ENCODE measurements at regions of chr11 and their contacts with region 1.

Region 1: GRCh38 chr11:63906585-63906984 is 10.4 kb downstream of the RCOR2 start:
- DNase-seq: peak in 1 of 2 experiments; percentile 69
- H3K4me3 ChIP-seq: no peak overlapping the region
- H3K27ac ChIP-seq: no peak overlapping the region
- H3K4me1 ChIP-seq: peaks cover 6 to 51% (median 41%) of the 10 kb centered on the region in 4 experiments
- H3K27me3 ChIP-seq: no peaks in the 10 kb centered on the region
- CTCF ChIP-seq: peak in 2 of 3 experiments; percentile 18 to 22; a peak in 2 of 4 replicates
- EP300 ChIP-seq: no peak
- POLR2A ChIP-seq: no peak
- RAD21 ChIP-seq: peak; percentile 28 to 39; a peak in 3 of 4 replicates

Region 2: GRCh38 chr11:63829823-63830489 is 76.6 kb before region 1 on chr11:
- CTCF ChIA-PET with region 1: interaction called, 163 read pairs
- POLR2A ChIA-PET with region 1: interaction called, 4 read pairs
- DNase-seq: peak in 1 of 2 experiments; percentile 65
- H3K4me3 ChIP-seq: no peak overlapping the region
- H3K27ac ChIP-seq: no peak overlapping the region
- H3K4me1 ChIP-seq: peaks cover 3 to 12% (median 8%) of the 10 kb centered on the region in 4 experiments
- H3K27me3 ChIP-seq: no peaks in the 10 kb centered on the region
- CTCF ChIP-seq: peak; percentile 69 to 85 (median 80)
- EP300 ChIP-seq: no peak
- POLR2A ChIP-seq: no peak
- RAD21 ChIP-seq: peak; percentile 76 to 84

Region 3: GRCh38 chr11:63871962-63872799 is 34.4 kb before region 1 on chr11:
- CTCF ChIA-PET with region 1: interaction called, 45 read pairs
- POLR2A ChIA-PET with region 1: interaction called, 4 read pairs
- DNase-seq: no peak
- H3K4me3 ChIP-seq: no peak overlapping the region
- H3K27ac ChIP-seq: no peak overlapping the region
- H3K4me1 ChIP-seq: peaks cover 4 to 25% (median 8%) of the 10 kb centered on the region in 4 experiments
- H3K27me3 ChIP-seq: no peaks in the 10 kb centered on the region
- CTCF ChIP-seq: peak; percentile 14 to 45 (median 34)
- EP300 ChIP-seq: no peak
- POLR2A ChIP-seq: no peak
- RAD21 ChIP-seq: peak; percentile 51 to 61

Region 4: GRCh38 chr11:63888170-63889086 is 18.2 kb before region 1 on chr11:
- CTCF ChIA-PET with region 1: interaction called, 39 read pairs
- POLR2A ChIA-PET with region 1: interaction called, 11 read pairs
- DNase-seq: peak in 1 of 2 experiments; percentile 60
- H3K4me3 ChIP-seq: peak overlapping the region in 2 of 4 experiments; percentile 10 to 39; a peak in 3 of 8 replicates
- H3K27ac ChIP-seq: peak overlapping the region; percentile 73; the same call in 1 of the 2 replicates
- H3K4me1 ChIP-seq: peaks cover 9 to 26% (median 12%) of the 10 kb centered on the region in 4 experiments
- H3K27me3 ChIP-seq: no peaks in the 10 kb centered on the region
- CTCF ChIP-seq: no peak
- EP300 ChIP-seq: no peak
- POLR2A ChIP-seq: no peak
- RAD21 ChIP-seq: 0 out of 4 replicates have a peak, but pooled peaks of 1 of the 2 experiments have one; percentile 9

Region 5: GRCh38 chr11:64021757-64022093 is 115.1 kb after region 1 on chr11:
- CTCF ChIA-PET with region 1: no interaction called
- POLR2A ChIA-PET with region 1: no interaction called
- DNase-seq: no peak
- H3K4me3 ChIP-seq: no peak overlapping the region
- H3K27ac ChIP-seq: no peak overlapping the region
- H3K4me1 ChIP-seq: peaks cover 3 to 44% (median 32%) of the 10 kb centered on the region in 4 experiments
- H3K27me3 ChIP-seq: peaks cover 0 to 16% (median 12%) of the 10 kb centered on the region in 4 experiments; a peak in 5 of 7 replicates
- CTCF ChIP-seq: peak in 1 of 3 experiments; percentile 5; a peak in 1 of 4 replicates
- EP300 ChIP-seq: no peak
- POLR2A ChIP-seq: no peak
- RAD21 ChIP-seq: peak in 1 of 2 experiments; percentile 11; a peak in 1 of 4 replicates

Region 6: DNA sequence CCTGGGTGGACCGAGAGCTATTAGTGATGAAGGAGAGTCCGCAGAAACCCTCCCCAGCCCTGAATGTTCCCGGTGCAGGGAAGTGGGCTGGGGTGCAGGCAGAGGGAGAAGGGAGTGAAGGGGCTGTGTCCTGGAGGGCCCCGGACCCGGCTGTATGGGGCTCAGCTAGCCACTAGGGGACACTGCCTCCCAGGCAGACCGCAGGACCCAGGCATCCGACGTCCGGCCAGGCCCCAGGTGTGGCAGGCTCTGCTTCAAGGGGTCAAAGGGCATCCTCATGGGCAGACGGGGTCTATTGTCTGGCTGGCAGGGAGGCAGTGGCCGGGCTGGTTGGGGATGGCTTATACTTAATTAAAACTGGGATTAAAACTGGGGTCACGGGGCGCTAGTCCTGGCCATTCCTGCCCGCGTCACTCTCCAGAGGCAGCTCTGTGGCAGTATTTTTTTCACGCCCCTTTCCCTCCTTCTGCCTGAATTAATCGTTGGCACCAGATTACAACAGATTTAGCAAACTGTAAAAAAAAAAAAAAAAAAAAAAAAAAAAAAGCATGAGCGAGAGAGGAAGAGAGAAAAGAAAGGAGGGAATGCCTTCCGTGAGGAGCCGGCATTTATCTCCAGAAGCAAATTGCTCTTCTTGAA is 134.2 kb after region 1 on chr11:
- CTCF ChIA-PET with region 1: no interaction called
- POLR2A ChIA-PET with region 1: no interaction called
- DNase-seq: peak in 1 of 2 experiments; percentile 79
- H3K4me3 ChIP-seq: no peak overlapping the region
- H3K27ac ChIP-seq: no peak overlapping the region
- H3K4me1 ChIP-seq: peaks cover 0 to 13% (median 5%) of the 10 kb centered on the region in 4 experiments; a peak in 5 of 7 replicates
- H3K27me3 ChIP-seq: peaks cover 44 to 94% (median 83%) of the 10 kb centered on the region in 4 experiments
- CTCF ChIP-seq: peak in 2 of 3 experiments; percentile 93; a peak in 3 of 4 replicates
- EP300 ChIP-seq: no peak; a peak in 1 of 3 replicates
- POLR2A ChIP-seq: no peak
- RAD21 ChIP-seq: peak; percentile 91

Measured in H1 (cell line).